Endothelial cell of umbilical vein (primary cell): ENCODE measurements at regions of chrX and their contacts with region 1.

Region 1: DNA sequence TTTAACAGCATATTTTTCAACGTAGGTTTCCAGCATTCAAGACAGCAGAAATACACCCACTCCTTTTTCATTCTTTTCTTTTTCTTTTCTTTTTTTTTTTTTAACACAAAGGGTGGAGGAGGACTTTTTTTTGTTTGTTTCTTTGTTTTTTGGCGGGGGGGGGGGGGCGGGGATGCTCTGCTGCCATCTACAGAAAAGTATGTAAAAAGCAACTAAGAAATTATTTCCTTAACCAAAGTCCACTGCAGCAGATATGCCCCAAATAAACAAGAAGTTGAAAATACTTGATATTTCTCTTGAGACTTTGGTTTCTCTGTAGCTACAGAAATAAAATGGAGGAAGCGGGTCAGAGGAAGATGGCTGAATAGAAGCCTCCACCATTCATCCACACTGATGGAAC is 63.2 kb upstream of the PBDC1 start:
- DNase-seq: no peak
- H3K4me3 ChIP-seq: no peak overlapping the region
- H3K27ac ChIP-seq: no peak overlapping the region
- H3K4me1 ChIP-seq: no peaks in the 10 kb centered on the region
- H3K27me3 ChIP-seq: no peaks in the 10 kb centered on the region
- CTCF ChIP-seq: no peak
- POLR2A ChIP-seq: no peak

Region 2: DNA sequence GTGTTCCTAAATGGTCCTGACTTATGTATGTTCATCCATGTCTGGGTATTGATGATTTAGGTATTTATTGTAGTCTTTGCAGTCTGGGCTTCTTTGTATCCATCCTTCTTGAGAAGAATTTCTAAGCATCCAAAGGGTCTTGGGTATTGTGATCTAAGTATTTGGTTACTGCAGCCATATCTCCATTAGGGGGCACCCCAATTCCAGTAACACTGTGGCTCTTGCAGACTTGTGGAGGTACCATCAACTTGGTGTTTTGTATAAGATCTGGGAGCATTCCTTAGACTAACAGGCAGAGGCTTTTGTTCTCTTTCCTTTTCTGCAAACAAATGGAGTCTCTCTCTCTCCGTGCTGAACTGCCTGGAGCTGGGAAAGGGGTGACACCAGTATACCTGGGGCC is 1070.7 kb before region 1 on chrX:
- CTCF ChIA-PET with region 1: no interaction called
- POLR2A ChIA-PET with region 1: no interaction called
- dilution Hi-C with region 1: no loop called
- intact Hi-C with region 1: loop called (anchors 5 kb)
- DNase-seq: peak; percentile 23
- H3K4me3 ChIP-seq: no peak overlapping the region
- H3K27ac ChIP-seq: no peak overlapping the region
- H3K4me1 ChIP-seq: no peaks in the 10 kb centered on the region
- H3K27me3 ChIP-seq: no peaks in the 10 kb centered on the region
- CTCF ChIP-seq: no peak
- POLR2A ChIP-seq: no peak